ENCODE measurements at regions of chr9 and their contacts with region 1.

Region 1: GRCh38 chr9:21802195-21803000 is at the start of gene MTAP:
- DNase-seq: peak; percentile 82
- H3K4me3 Mint-ChIP-seq: peak within 1 kb of the TSS; percentile 99
- H3K27ac Mint-ChIP-seq: peak within 1 kb of the TSS; percentile 97
- H3K4me1 Mint-ChIP-seq: peaks cover 41% of the 10 kb centered on the region
- H3K27me3 Mint-ChIP-seq: peaks cover 4% of the 10 kb centered on the region
- total RNA-seq, gene MTAP: 59.0 to 66.4 TPM

Region 2: DNA sequence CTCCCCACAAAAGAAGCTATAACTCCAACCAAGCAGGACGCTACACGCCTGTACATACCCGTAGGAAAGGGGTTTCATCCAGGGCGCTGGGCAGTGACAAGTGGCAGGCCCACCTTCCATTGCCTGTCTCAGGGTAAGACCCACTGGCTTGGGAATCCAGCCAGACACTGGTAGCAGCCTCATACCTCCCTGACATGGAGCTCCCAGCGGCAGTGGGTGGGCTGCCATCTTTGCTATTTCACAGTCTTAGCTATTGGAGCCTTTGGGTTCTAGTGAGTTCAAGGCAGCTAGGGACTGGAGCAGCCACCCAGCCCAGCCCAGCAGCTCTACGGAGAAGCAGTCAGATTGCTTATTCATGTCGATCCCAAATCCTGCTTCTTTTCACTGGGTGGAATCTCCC is 592.1 kb before region 1 on chr9:
- CTCF ChIA-PET with region 1: no interaction called
- intact Hi-C with region 1: loop called (anchors 5 kb)
- DNase-seq: no peak
- H3K4me3 Mint-ChIP-seq: no peak overlapping the region
- H3K27ac Mint-ChIP-seq: no peak overlapping the region
- H3K4me1 Mint-ChIP-seq: peaks cover 7% of the 10 kb centered on the region
- H3K27me3 Mint-ChIP-seq: peaks cover 5% of the 10 kb centered on the region

Region 3: GRCh38 chr9:21334701-21335632 is 467.4 kb before region 1 on chr9 and contains the start of gene KLHL9:
- CTCF ChIA-PET with region 1: no interaction called
- intact Hi-C with region 1: loop called (anchors 2 kb)
- DNase-seq: peak; percentile 93
- H3K4me3 Mint-ChIP-seq: peak within 1 kb of the TSS; percentile 84
- H3K27ac Mint-ChIP-seq: peak within 1 kb of the TSS; percentile 91
- H3K4me1 Mint-ChIP-seq: peaks cover 48% of the 10 kb centered on the region
- H3K27me3 Mint-ChIP-seq: no peaks in the 10 kb centered on the region
- total RNA-seq, gene KLHL9: 17.5 to 18.3 TPM

Region 4: GRCh38 chr9:22073349-22073748 is 271.0 kb after region 1 on chr9:
- CTCF ChIA-PET with region 1: no interaction called
- intact Hi-C with region 1: no loop called
- DNase-seq: no peak
- H3K4me3 Mint-ChIP-seq: no peak overlapping the region
- H3K27ac Mint-ChIP-seq: no peak overlapping the region
- H3K4me1 Mint-ChIP-seq: peaks cover 27% of the 10 kb centered on the region
- H3K27me3 Mint-ChIP-seq: peaks cover 27% of the 10 kb centered on the region

Measured in activated naive CD4-positive, alpha-beta T cell treated with anti-CD3 and anti-CD28 coated beads for 36 hours (primary cell).